Calu3 (cell line): ENCODE measurements at regions of chr2 and their contacts with region 1.

Region 1: DNA sequence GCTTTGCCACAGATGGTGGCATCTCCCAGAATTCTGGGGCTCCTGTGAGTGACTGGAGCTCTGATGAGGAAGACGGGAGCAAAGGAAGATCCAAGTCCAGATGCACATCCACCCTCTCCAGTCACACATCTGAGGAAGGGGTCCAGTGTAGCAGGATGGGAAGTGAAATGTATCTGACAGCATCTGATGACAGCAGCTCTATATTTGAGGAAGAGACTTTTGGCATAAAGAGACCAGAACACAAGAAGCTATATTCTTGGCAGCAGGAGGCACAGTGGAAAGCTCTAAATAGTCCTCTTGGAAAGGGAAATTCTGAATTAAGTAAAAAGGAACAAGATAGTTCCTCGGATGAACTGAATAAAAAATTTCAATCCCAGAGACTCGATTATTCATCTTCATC is 23.5 kb upstream of the C1GALT1C1L start:
- DNase-seq: no peak
- H3K4me3 Mint-ChIP-seq: no peak overlapping the region
- H3K27ac Mint-ChIP-seq: no peak overlapping the region
- H3K4me1 Mint-ChIP-seq: no peaks in the 10 kb centered on the region
- H3K27me3 Mint-ChIP-seq: no peaks in the 10 kb centered on the region
- CTCF ChIP-seq: no peak

Region 2: GRCh38 chr2:43142921-43143438 is 556.8 kb before region 1 on chr2:
- CTCF ChIA-PET with region 1: no interaction called
- intact Hi-C with region 1: no loop called
- DNase-seq: peak; percentile 38
- H3K4me3 Mint-ChIP-seq: no peak overlapping the region
- H3K27ac Mint-ChIP-seq: no peak overlapping the region
- H3K4me1 Mint-ChIP-seq: peaks cover 18% of the 10 kb centered on the region
- H3K27me3 Mint-ChIP-seq: no peaks in the 10 kb centered on the region
- CTCF ChIP-seq: no peak

Region 3: GRCh38 chr2:43648994-43649701 is 50.6 kb before region 1 on chr2:
- CTCF ChIA-PET with region 1: no interaction called
- intact Hi-C with region 1: loop called (anchors 10 kb)
- DNase-seq: no peak
- H3K4me3 Mint-ChIP-seq: no peak overlapping the region
- H3K27ac Mint-ChIP-seq: no peak overlapping the region
- H3K4me1 Mint-ChIP-seq: no peaks in the 10 kb centered on the region
- H3K27me3 Mint-ChIP-seq: no peaks in the 10 kb centered on the region
- CTCF ChIP-seq: no peak

Region 4: DNA sequence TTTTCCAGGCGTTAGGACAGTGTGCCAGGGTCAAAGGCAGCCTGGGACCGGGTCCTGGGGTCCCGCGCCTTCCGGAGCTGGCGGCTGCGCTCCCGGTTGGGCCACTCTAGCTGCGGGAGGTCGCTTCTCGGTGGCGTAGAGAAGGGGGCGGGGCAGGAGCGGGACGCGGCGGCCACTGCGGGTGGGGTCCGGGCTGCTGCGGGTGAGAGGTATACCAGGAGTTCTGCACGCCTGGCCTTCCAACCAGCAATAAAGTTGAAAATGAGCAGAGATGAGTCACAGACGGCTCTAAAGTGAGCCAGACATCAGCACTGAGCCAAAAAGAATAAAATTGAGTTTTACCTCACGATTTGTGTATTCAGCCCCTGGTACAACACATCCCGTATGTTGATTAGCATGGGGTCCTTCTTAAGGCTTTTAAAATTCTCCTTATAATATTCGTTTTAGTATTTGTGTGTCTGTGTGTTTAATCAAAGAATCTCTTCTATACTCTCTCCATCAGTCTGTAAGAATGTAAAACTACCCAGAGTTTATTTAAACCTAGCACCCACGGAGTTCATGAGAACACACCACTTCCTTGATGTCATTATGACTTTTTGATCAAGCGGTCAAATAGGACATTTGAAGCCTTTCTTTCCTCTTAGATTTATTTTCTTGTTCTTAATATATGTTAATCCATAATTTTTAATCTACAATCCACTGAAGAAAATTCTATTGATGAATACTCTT is 23.3 kb before region 1 on chr2 and contains the start of gene C1GALT1C1L:
- CTCF ChIA-PET with region 1: no interaction called
- intact Hi-C with region 1: no loop called
- DNase-seq: peak; percentile 79
- H3K4me3 Mint-ChIP-seq: peak within 1 kb of the TSS; percentile 70
- H3K27ac Mint-ChIP-seq: peak within 1 kb of the TSS; percentile 42
- H3K4me1 Mint-ChIP-seq: peaks cover 8% of the 10 kb centered on the region
- H3K27me3 Mint-ChIP-seq: no peaks in the 10 kb centered on the region
- CTCF ChIP-seq: no peak
- total RNA-seq, gene C1GALT1C1L: 1.3 and 1.5 TPM in 2 replicates

Region 5: GRCh38 chr2:44310287-44310686 is 610.5 kb after region 1 on chr2:
- CTCF ChIA-PET with region 1: no interaction called
- intact Hi-C with region 1: no loop called
- DNase-seq: no peak
- H3K4me3 Mint-ChIP-seq: no peak overlapping the region
- H3K27ac Mint-ChIP-seq: no peak overlapping the region
- H3K4me1 Mint-ChIP-seq: no peaks in the 10 kb centered on the region
- H3K27me3 Mint-ChIP-seq: no peaks in the 10 kb centered on the region
- CTCF ChIP-seq: no peak